Sigmoid colon (tissue), 7 donors: ENCODE measurements at regions of chr2 and their contacts with region 1.

Region 1: DNA sequence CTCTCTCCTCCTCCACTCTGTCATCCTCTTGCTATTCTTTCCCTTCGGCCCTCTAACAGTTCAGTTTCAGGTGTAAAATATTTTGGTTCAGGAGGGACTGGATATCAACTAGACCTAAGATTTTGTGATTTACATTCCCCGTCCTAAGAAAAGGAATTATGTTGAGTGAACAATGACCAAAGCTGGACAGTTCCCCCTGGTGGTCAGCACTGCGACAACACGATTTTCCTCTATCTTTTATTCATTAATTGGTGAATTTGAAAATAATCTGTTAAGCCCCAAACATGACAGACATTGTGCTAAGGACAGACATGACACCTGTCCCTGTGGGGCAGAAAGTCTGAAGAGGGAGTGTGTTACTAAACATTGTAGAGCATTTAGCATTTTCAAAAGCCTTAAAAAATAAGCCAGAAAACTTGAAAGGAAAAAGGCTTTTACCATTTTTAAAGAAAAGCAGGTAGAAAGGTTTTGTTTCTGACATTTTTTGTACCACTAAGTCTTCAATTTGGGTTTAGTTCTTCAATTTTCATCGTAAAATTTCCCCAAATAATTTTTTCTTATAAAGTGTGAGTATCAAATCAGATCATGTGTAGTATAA is 28.4 kb upstream of the GTF2A1L start:
- DNase-seq: no peak
- H3K4me3 ChIP-seq: no peak overlapping the region
- H3K27ac ChIP-seq: peak overlapping the region in 2 of 4 donors; percentile 30 to 51
- H3K4me1 ChIP-seq: peaks cover 0 to 47% (median 38%) of the 10 kb centered on the region in 4 donors
- H3K27me3 ChIP-seq: no peaks in the 10 kb centered on the region
- CTCF ChIP-seq: peak; percentile 52 to 81 (median 66)
- EP300 ChIP-seq: no peak
- POLR2A ChIP-seq: no peak

Region 2: DNA sequence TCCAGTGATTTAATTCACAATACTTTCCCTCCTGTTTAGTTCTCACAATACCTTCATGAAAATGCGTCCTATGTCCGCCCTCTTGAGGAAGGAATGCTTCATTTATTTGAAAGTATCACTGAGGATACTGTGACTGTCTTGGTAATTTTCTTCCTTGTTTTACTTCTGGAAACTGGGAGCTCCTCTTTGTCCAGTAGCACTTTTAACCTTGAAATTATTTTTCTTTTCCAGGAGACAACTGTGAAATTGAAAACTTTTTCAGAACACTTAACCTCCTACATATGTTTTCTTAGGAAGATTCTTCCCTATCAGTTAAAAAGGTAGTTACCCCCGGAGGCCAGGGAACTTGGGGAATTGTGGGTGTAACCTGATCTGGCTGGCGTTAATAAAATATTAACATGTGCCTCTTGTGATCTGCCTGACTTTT is 118.2 kb before region 1 on chr2:
- intact Hi-C with region 1: loop called (anchors 2 kb)
- DNase-seq: no peak
- H3K4me3 ChIP-seq: no peak overlapping the region
- H3K27ac ChIP-seq: peak overlapping the region; percentile 70 to 91 (median 82)
- H3K4me1 ChIP-seq: peaks cover 0 to 52% (median 23%) of the 10 kb centered on the region in 4 donors
- H3K27me3 ChIP-seq: no peaks in the 10 kb centered on the region
- CTCF ChIP-seq: peak; percentile 54 to 82 (median 76)
- EP300 ChIP-seq: no peak
- POLR2A ChIP-seq: no peak

Region 3: DNA sequence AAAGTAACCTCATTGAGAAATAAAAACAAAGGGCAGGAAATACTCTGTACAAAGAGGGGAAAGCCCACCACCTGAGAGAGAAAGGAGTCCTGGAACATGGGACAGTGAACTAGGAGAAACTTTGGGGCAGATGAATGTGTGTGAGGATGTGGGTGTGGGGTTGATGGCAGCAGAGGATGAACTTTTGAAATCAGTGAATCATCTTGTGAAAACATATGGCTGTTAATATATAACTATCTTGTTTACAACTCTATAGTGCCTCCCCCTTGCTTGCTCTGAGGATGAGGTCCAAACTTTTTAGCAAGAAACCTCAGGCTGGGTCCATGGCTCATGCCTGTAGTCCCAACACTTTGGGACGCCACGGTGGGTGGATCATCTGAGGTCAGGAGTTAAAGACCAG is 338.1 kb after region 1 on chr2:
- intact Hi-C with region 1: no loop called
- DNase-seq: no peak
- H3K4me3 ChIP-seq: no peak overlapping the region
- H3K27ac ChIP-seq: no peak overlapping the region
- H3K4me1 ChIP-seq: no peaks in the 10 kb centered on the region
- H3K27me3 ChIP-seq: peaks cover 0 to 2% (median 0%) of the 10 kb centered on the region in 3 donors
- CTCF ChIP-seq: no peak
- EP300 ChIP-seq: no peak
- POLR2A ChIP-seq: no peak